ENCODE measurements at regions of chr4 and their contacts with region 1.

Region 1: DNA sequence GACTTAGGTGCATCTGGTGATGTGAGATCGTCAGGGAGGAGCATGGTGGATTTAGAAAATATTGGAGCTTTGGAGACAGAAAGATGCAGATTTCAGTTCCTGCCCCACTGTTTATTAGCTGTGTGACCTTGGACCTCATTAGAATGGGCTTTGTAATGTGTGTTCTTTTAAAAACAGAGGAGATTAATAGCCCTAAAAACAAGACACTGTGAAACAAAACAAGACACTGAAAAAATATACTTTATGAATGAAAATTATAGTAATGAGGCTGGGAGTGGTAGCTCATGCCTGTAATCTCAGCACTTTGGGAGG is 79.5 kb downstream of the EVC start:
- DNase-seq: no peak
- H3K4me3 ChIP-seq: no peak overlapping the region
- H3K27ac ChIP-seq: no peak overlapping the region
- H3K27me3 ChIP-seq: no peaks in the 10 kb centered on the region
- CTCF ChIP-seq: no peak

Region 2: GRCh38 chr4:5710961-5711478 is 79.5 kb before region 1 on chr4 and contains the start of gene EVC:
- CTCF ChIA-PET with region 1: interaction called, 16 read pairs
- POLR2A ChIA-PET with region 1: no interaction called
- DNase-seq: peak; percentile 36
- H3K4me3 ChIP-seq: peak within 1 kb of the TSS; percentile 91
- H3K27ac ChIP-seq: peak within 1 kb of the TSS; percentile 78
- H3K27me3 ChIP-seq: no peaks in the 10 kb centered on the region
- CTCF ChIP-seq: no peak
- polyA plus RNA-seq, gene EVC: 11.5 and 15.8 TPM in 2 replicates